ENCODE measurements at regions of chr16 and their contacts with region 1.

Region 1: GRCh38 chr16:46947900-46948547 is 25.4 kb downstream of the DNAJA2 start:
- DNase-seq: peak; percentile 32
- ATAC-seq: peak; percentile 90
- H3K4me3 ChIP-seq: no peak overlapping the region
- H3K27ac ChIP-seq: no peak overlapping the region
- H3K4me1 ChIP-seq: peaks cover 5% of the 10 kb centered on the region; the same call in 1 of the 2 replicates
- H3K27me3 ChIP-seq: no peaks in the 10 kb centered on the region
- CTCF ChIP-seq: peak; percentile 58 to 77 (median 59); a peak in 5 of 6 replicates
- EP300 ChIP-seq: no peak
- POLR2A ChIP-seq: no peak
- RAD21 ChIP-seq: peak; percentile 95

Region 2: GRCh38 chr16:46961373-46962353 is 13.6 kb after region 1 on chr16:
- CTCF ChIA-PET with region 1: interaction called, 7 read pairs
- POLR2A ChIA-PET with region 1: no interaction called
- RAD21 ChIA-PET with region 1: interaction called, 4 read pairs
- SMC1A ChIA-PET with region 1: interaction called, 19 read pairs
- in situ Hi-C with region 1: no loop called
- intact Hi-C with region 1: no loop called
- DNase-seq: no peak
- ATAC-seq: peak; percentile 89
- H3K4me3 ChIP-seq: 0 out of 2 replicates have a peak overlapping the region, but pooled peaks have one; percentile 8
- H3K27ac ChIP-seq: no peak overlapping the region
- H3K4me1 ChIP-seq: peaks cover 13% of the 10 kb centered on the region
- H3K27me3 ChIP-seq: no peaks in the 10 kb centered on the region
- CTCF ChIP-seq: no peak
- EP300 ChIP-seq: no peak
- POLR2A ChIP-seq: no peak
- RAD21 ChIP-seq: no peak

Region 3: DNA sequence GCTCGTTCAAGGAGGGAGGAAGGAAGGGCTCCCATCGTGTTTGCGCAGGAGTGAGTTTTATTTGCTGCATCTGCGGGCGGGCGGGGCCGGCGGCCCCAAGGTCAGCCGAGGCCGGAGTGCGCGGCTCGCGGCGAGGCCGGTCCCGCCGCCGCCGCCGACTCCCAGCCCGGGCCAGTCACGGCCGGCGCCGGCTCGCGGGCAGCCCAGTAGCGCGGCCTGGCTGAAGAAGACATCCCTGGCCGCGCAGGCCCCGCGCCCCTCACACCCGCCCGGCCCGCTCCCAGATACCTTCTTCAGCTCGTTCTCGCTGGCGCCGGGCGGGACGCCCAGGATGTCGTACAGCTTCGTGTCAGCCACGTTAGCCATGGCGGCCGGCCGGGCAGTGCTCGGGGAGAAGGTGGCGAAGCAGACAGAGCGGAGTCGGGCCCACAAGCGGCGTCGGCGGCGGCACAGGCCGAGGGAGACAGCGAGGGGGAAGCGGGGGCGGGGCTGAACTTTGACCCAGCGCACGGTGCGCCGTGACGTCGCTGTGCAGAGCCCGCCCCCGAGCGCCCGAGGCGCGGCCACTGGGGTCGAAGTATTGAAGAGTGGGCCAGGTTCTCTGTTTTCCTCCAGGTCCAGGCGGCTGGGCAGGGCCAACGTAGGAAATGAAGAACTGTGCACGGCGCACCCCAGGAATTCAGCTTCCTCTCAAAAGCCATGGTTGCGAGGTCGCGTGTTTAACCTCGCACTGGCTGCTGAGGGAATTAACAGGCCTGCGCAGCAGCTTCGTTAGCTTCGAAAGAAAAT is 25.4 kb after region 1 on chr16 and contains the start of gene DNAJA2:
- CTCF ChIA-PET with region 1: interaction called, 11 read pairs
- POLR2A ChIA-PET with region 1: interaction called, 4 read pairs
- RAD21 ChIA-PET with region 1: interaction called, 3 read pairs
- SMC1A ChIA-PET with region 1: interaction called, 7 read pairs
- in situ Hi-C with region 1: no loop called
- intact Hi-C with region 1: no loop called
- DNase-seq: peak; percentile 54
- ATAC-seq: peak; percentile 90
- H3K4me3 ChIP-seq: peak within 1 kb of the TSS; percentile 88
- H3K27ac ChIP-seq: peak within 1 kb of the TSS; percentile 98
- H3K4me1 ChIP-seq: peaks cover 23% of the 10 kb centered on the region
- H3K27me3 ChIP-seq: no peaks in the 10 kb centered on the region
- CTCF ChIP-seq: no peak
- EP300 ChIP-seq: no peak
- POLR2A ChIP-seq: peak; percentile 91
- RAD21 ChIP-seq: no peak
- polyA plus RNA-seq, gene DNAJA2: 40.4 to 43.5 TPM

Region 4: GRCh38 chr16:46996952-46997458 is 49.0 kb after region 1 on chr16:
- CTCF ChIA-PET with region 1: no interaction called
- POLR2A ChIA-PET with region 1: no interaction called
- RAD21 ChIA-PET with region 1: no interaction called
- SMC1A ChIA-PET with region 1: no interaction called
- in situ Hi-C with region 1: no loop called
- intact Hi-C with region 1: no loop called
- DNase-seq: no peak
- ATAC-seq: no peak
- H3K4me3 ChIP-seq: no peak overlapping the region
- H3K27ac ChIP-seq: no peak overlapping the region
- H3K4me1 ChIP-seq: no peaks in the 10 kb centered on the region
- H3K27me3 ChIP-seq: no peaks in the 10 kb centered on the region
- CTCF ChIP-seq: no peak
- EP300 ChIP-seq: no peak
- POLR2A ChIP-seq: no peak
- RAD21 ChIP-seq: no peak

Region 5: DNA sequence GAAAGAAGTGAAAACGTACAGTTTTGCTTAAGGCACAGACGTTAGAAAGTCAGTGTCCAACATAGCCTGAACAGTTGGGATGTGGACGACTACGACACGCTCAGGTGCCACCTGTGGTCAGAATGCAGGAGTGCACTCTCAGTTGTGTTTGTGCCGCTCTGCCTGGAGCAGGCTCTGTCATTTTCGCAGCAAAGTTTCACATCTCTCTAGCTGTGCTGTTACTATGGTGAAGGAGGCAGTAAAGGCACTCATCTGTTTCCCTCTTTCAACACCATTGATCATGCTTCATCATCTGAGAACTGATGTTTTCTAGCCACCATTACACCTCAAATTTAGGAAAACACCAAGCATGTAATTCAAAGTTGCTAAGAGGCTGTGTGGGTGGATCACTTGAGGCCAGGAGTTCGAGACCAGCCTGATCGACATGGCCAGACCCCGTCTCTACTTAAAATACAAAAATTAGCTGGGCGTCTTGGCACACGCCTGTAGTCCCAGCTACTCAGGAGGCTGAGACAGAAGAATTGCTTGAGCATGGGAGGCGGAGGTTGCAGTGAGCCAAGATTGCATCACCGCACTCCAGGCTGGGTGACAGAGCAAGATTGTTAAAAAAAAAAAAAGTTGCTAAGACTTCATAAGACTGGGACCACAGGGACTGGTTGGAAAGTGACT is 70.3 kb after region 1 on chr16:
- CTCF ChIA-PET with region 1: interaction called, 23 read pairs
- POLR2A ChIA-PET with region 1: interaction called, 4 read pairs
- RAD21 ChIA-PET with region 1: interaction called, 14 read pairs
- SMC1A ChIA-PET with region 1: interaction called, 14 read pairs
- in situ Hi-C with region 1: no loop called
- intact Hi-C with region 1: loop called (anchors 1 kb)
- DNase-seq: peak; percentile 98
- ATAC-seq: peak; percentile 97
- H3K4me3 ChIP-seq: no peak overlapping the region
- H3K27ac ChIP-seq: peak overlapping the region; percentile 38; the same call in 1 of the 2 replicates
- H3K4me1 ChIP-seq: peaks cover 31% of the 10 kb centered on the region
- H3K27me3 ChIP-seq: no peaks in the 10 kb centered on the region
- CTCF ChIP-seq: peak; percentile 72 to 86 (median 73)
- EP300 ChIP-seq: peak; percentile 54 to 55; a peak in 3 of 4 replicates
- POLR2A ChIP-seq: no peak
- RAD21 ChIP-seq: peak; percentile 80

Region 6: GRCh38 chr16:47073223-47074155 is 125.5 kb after region 1 on chr16:
- CTCF ChIA-PET with region 1: no interaction called
- POLR2A ChIA-PET with region 1: no interaction called
- RAD21 ChIA-PET with region 1: no interaction called
- SMC1A ChIA-PET with region 1: no interaction called
- in situ Hi-C with region 1: no loop called
- intact Hi-C with region 1: no loop called
- DNase-seq: peak; percentile 43
- ATAC-seq: peak; percentile 82
- H3K4me3 ChIP-seq: no peak overlapping the region
- H3K27ac ChIP-seq: peak overlapping the region; percentile 48
- H3K4me1 ChIP-seq: peaks cover 12% of the 10 kb centered on the region
- H3K27me3 ChIP-seq: no peaks in the 10 kb centered on the region
- CTCF ChIP-seq: no peak
- EP300 ChIP-seq: 0 out of 4 replicates have a peak, but pooled peaks of 1 of the 2 experiments have one; percentile 27
- POLR2A ChIP-seq: no peak
- RAD21 ChIP-seq: no peak

Region 7: GRCh38 chr16:48164907-48165726 is 1217.1 kb after region 1 on chr16:
- CTCF ChIA-PET with region 1: interaction called, 12 read pairs
- POLR2A ChIA-PET with region 1: no interaction called
- RAD21 ChIA-PET with region 1: interaction called, 11 read pairs
- SMC1A ChIA-PET with region 1: interaction called, 6 read pairs
- in situ Hi-C with region 1: loop called (anchors 5 kb)
- intact Hi-C with region 1: loop called (anchors 1 kb)
- DNase-seq: no peak
- ATAC-seq: peak; percentile 98
- H3K4me3 ChIP-seq: no peak overlapping the region
- H3K27ac ChIP-seq: no peak overlapping the region
- H3K4me1 ChIP-seq: peaks cover 8% of the 10 kb centered on the region; the same call in 1 of the 2 replicates
- H3K27me3 ChIP-seq: no peaks in the 10 kb centered on the region
- CTCF ChIP-seq: peak; percentile 88 to 94 (median 90)
- EP300 ChIP-seq: no peak
- POLR2A ChIP-seq: no peak
- RAD21 ChIP-seq: peak; percentile 93